ENCODE measurements at regions of chr1 and their contacts with region 1.

Region 1: GRCh38 chr1:101357444-101357986 is 120.7 kb downstream of the S1PR1 start:
- DNase-seq: peak; percentile 70
- H3K4me3 Mint-ChIP-seq: no peak overlapping the region
- H3K27ac Mint-ChIP-seq: no peak overlapping the region
- H3K4me1 Mint-ChIP-seq: peaks cover 8% of the 10 kb centered on the region
- H3K27me3 Mint-ChIP-seq: peaks cover 18% of the 10 kb centered on the region

Region 2: GRCh38 chr1:100905181-100905580 is 452.3 kb before region 1 on chr1:
- CTCF ChIA-PET with region 1: interaction called, 12 read pairs
- POLR2A ChIA-PET with region 1: no interaction called
- DNase-seq: no peak
- H3K4me3 Mint-ChIP-seq: no peak overlapping the region
- H3K27ac Mint-ChIP-seq: no peak overlapping the region
- H3K4me1 Mint-ChIP-seq: peaks cover 16% of the 10 kb centered on the region
- H3K27me3 Mint-ChIP-seq: no peaks in the 10 kb centered on the region

Region 3: DNA sequence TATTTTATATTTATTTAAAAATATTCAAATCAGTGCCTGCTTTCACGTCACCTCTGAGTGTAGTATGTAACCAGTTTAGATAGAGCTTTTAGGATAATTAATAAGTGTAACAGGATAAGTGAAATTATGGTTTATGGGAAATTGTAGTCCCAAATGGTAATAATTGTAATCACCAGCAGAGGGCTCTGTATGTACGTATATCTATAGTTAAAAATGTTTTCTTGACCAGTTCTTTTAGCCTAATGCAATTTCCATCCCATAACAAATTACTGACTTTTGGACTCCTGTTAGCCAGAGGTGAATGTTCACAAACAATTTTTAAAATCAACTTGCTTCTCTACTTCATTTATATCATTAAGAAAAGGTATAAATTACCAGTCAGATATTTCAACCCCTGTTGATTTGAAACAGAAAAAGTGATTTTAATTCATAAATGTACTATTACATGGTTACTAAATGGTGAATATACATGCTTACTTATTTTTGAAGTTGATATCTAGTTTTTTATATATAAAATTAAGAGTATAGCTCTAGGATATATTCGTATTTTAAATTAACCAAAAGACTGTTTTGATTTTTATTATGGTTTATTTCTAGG is 436.3 kb before region 1 on chr1:
- CTCF ChIA-PET with region 1: interaction called, 10 read pairs
- POLR2A ChIA-PET with region 1: interaction called, 3 read pairs
- DNase-seq: no peak
- H3K4me3 Mint-ChIP-seq: no peak overlapping the region
- H3K27ac Mint-ChIP-seq: no peak overlapping the region
- H3K4me1 Mint-ChIP-seq: peaks cover 32% of the 10 kb centered on the region
- H3K27me3 Mint-ChIP-seq: no peaks in the 10 kb centered on the region

Region 4: GRCh38 chr1:101136739-101137138 is 220.8 kb before region 1 on chr1:
- CTCF ChIA-PET with region 1: no interaction called
- POLR2A ChIA-PET with region 1: no interaction called
- DNase-seq: peak; percentile 26
- H3K4me3 Mint-ChIP-seq: no peak overlapping the region
- H3K27ac Mint-ChIP-seq: peak overlapping the region; percentile 64
- H3K4me1 Mint-ChIP-seq: peaks cover 58% of the 10 kb centered on the region
- H3K27me3 Mint-ChIP-seq: no peaks in the 10 kb centered on the region

Region 5: GRCh38 chr1:101174722-101175121 is 182.8 kb before region 1 on chr1:
- CTCF ChIA-PET with region 1: no interaction called
- POLR2A ChIA-PET with region 1: no interaction called
- DNase-seq: no peak
- H3K4me3 Mint-ChIP-seq: no peak overlapping the region
- H3K27ac Mint-ChIP-seq: peak overlapping the region; percentile 2
- H3K4me1 Mint-ChIP-seq: peaks cover 46% of the 10 kb centered on the region
- H3K27me3 Mint-ChIP-seq: no peaks in the 10 kb centered on the region

Region 6: GRCh38 chr1:101317590-101317989 is 39.9 kb before region 1 on chr1:
- CTCF ChIA-PET with region 1: interaction called, 152 read pairs
- POLR2A ChIA-PET with region 1: no interaction called
- DNase-seq: no peak
- H3K4me3 Mint-ChIP-seq: no peak overlapping the region
- H3K27ac Mint-ChIP-seq: no peak overlapping the region
- H3K4me1 Mint-ChIP-seq: peaks cover 15% of the 10 kb centered on the region
- H3K27me3 Mint-ChIP-seq: peaks cover 31% of the 10 kb centered on the region

Region 7: DNA sequence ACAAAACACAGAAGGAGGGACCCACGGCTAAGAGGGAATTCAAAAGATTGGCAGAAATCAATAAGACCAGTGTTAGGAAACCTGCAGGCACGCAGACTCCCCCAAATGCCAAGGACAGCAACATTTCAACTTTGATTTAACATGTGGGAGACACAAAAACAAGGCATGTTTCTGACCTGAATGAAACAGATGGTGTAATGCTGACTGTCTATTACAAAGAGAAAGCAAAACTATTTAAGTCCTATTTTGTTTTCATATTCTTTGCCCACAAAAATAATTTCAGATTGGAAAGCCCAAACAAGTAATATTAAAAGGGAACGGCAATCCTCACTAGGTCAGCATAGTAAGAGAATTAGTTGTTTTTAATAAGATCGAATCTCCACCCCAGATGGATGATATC is 12.8 kb before region 1 on chr1:
- CTCF ChIA-PET with region 1: interaction called, 30 read pairs
- POLR2A ChIA-PET with region 1: no interaction called
- DNase-seq: no peak
- H3K4me3 Mint-ChIP-seq: no peak overlapping the region
- H3K27ac Mint-ChIP-seq: no peak overlapping the region
- H3K4me1 Mint-ChIP-seq: peaks cover 37% of the 10 kb centered on the region
- H3K27me3 Mint-ChIP-seq: peaks cover 5% of the 10 kb centered on the region

Region 8: GRCh38 chr1:101371259-101371658 is 13.7 kb after region 1 on chr1:
- CTCF ChIA-PET with region 1: interaction called, 33 read pairs
- POLR2A ChIA-PET with region 1: no interaction called
- DNase-seq: peak; percentile 19
- H3K4me3 Mint-ChIP-seq: no peak overlapping the region
- H3K27ac Mint-ChIP-seq: peak overlapping the region; percentile 13
- H3K4me1 Mint-ChIP-seq: peaks cover 17% of the 10 kb centered on the region
- H3K27me3 Mint-ChIP-seq: peaks cover 9% of the 10 kb centered on the region